ENCODE measurements at regions of chr12 and their contacts with region 1.

Region 1: GRCh38 chr12:131104463-131105350 is 151.0 kb downstream of the ADGRD1 start:
- DNase-seq: no peak
- H3K4me3 ChIP-seq: no peak overlapping the region
- H3K27me3 ChIP-seq: no peaks in the 10 kb centered on the region
- CTCF ChIP-seq: peak; percentile 96

Region 2: DNA sequence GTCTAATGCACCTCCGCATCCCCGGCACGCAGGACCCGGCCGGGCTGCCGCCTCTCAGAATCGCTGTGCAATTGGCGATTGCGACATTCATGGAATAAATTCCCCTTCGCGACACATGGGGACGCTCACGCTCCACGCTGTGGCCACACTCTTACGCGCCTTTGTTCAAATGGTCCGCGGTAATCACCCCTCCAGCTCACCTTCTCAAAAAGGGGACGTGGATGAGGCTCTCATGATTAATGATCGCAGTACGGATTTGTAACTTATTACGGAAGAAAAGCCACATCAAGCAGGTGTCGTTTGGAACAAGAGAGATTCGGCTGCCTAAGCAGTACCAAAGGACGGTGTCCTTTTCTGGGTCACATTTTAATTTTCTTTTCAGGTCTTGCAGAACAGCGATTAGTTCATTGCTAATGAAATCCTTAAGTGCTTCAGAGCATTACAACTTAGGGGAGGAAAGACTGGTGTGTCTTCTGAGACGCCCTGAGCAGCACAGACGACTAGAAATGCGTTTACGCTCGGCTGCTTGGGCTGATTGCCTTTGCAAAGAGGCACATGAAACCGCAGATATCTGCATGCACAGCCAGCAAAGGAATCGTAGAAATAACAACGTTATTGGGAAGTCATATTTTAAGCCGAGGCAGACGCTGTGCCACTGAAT is 188.3 kb before region 1 on chr12:
- CTCF ChIA-PET with region 1: interaction called, 25 read pairs
- POLR2A ChIA-PET with region 1: no interaction called
- DNase-seq: no peak
- H3K4me3 ChIP-seq: peak overlapping the region; percentile 9
- H3K27me3 ChIP-seq: no peaks in the 10 kb centered on the region
- CTCF ChIP-seq: peak; percentile 99

Region 3: DNA sequence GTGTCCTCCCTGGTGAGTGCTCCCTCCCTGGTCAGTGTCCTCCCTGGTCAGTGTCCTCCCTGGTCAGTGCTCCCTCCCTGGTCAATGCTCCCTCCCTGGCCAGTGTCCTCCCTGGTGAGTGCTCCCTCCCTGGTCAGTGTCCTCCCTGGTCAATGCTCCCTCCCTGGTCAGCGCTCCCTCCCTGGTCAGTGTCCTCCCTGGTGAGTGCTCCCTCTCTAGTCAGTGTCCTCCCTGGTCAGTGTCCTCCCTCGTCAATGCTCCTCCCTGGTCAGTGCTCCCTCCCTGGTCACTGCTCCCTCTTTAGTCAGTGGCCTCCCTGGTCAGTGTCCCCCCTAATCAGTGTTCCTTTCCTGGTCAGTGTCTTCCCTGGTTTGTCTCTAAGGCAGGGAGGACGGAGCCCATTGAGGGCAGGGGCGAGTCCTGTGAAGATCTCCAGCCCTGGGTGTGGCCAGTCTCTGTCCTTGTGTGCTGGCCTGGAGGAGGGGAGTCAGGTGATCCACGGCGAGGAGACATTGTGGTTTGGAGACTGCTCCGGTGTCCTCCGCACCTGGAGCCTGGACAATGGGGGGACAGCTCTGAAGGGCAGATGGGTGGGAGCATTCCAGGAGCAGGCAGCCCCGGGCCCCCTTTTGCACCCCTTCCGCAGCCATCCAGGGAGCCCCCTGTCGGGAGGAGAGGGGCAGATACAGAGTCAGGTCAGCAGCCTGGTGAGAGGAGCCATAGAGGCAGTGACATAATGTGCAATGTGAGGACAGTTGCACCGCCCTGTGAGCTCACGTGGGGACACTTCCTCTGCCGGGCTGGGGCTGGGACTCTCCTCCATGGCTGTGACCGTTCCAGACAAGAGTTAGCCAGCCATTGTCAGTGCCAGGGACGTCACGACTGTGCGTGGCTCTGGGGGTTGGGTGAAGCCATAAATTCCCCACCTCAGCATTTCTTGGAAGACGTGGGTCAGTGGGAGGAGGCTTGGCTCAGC is 57.6 kb before region 1 on chr12:
- CTCF ChIA-PET with region 1: no interaction called
- POLR2A ChIA-PET with region 1: no interaction called
- DNase-seq: no peak
- H3K4me3 ChIP-seq: no peak overlapping the region
- H3K27me3 ChIP-seq: no peaks in the 10 kb centered on the region
- CTCF ChIP-seq: no peak

Region 4: DNA sequence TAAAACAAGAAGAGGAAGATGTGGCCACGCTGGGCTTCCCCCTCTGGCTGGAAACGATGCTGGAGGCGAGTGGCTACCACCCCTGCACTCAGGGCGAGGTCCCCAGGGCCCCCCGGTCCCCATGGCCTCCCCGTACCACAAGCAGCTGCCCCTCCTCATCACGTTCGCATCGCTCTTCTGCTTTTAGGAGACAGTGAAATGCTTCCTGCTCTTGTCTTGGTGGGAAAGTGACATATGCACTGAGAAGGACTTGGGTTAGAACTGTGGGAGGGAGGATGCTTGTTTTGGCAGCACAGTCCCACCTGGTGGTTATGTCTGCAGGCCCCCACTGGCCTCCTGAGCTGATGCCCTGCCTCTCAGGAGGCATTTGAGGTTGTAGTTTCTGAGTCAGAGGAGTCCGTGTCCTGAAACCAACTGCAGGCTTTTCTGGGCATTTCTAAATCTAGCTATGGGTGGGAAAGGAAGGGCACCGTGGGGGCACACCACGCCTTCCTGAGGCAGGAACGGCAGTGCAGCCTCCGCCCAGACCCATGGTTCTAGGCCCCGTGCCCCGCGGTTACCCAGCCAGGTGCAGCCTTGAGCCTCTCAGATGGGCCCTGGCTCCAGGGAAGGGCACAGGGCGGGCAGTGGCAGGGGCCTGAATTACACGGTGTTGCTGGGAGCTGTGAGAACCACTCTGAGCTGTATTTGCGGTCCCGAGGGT is 11.7 kb before region 1 on chr12:
- CTCF ChIA-PET with region 1: interaction called, 35 read pairs
- POLR2A ChIA-PET with region 1: no interaction called
- DNase-seq: no peak
- H3K4me3 ChIP-seq: no peak overlapping the region
- H3K27me3 ChIP-seq: no peaks in the 10 kb centered on the region
- CTCF ChIP-seq: no peak

Region 5: GRCh38 chr12:131116391-131117117 is 11.8 kb after region 1 on chr12:
- CTCF ChIA-PET with region 1: interaction called, 40 read pairs
- POLR2A ChIA-PET with region 1: no interaction called
- DNase-seq: peak; percentile 49
- H3K4me3 ChIP-seq: no peak overlapping the region
- H3K27me3 ChIP-seq: no peaks in the 10 kb centered on the region; the same call in 1 of the 2 replicates
- CTCF ChIP-seq: peak; percentile 62

Region 6: DNA sequence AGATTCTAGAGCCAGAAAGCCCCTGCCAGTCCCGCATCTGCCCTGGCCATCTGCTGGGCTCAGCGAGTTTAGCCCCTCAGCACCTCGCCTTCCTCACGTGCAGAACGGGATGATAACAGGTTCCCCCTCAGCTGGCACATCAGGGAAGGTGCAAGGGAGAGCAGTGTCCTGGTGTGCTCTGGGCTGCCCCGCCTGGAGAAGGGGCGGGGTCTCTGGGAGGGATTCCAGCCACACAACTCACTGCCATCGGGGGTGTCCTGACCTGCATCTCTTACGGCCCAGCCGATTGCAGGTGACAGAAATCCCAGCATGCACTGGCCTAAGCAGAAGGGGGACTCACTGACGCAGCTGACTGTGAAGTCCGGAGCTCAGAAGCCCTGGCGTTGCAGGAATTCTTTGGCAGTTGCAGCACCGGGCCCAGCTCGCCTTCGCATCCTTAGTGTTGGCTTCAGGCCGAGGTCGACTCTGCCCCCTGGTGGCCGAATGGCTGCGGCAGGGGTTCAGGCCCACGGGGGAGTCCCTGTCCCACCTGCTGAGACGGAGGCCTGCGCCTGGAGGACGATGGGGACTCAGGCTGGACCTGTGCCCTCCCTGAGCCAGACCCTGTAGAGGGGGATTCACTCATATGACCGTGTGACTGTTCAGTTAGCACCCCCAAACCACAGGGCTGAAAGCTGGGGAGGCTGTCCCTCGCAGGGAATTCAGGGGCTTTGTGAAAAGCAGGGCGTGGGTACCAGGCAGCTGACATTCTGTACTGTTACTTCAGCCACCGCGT is 27.6 kb after region 1 on chr12:
- CTCF ChIA-PET with region 1: interaction called, 96 read pairs
- POLR2A ChIA-PET with region 1: no interaction called
- DNase-seq: no peak
- H3K4me3 ChIP-seq: no peak overlapping the region
- H3K27me3 ChIP-seq: no peaks in the 10 kb centered on the region; the same call in 1 of the 2 replicates
- CTCF ChIP-seq: peak; percentile 80

Region 7: GRCh38 chr12:131830335-131830913 is 725.7 kb after region 1 on chr12:
- CTCF ChIA-PET with region 1: interaction called, 29 read pairs
- POLR2A ChIA-PET with region 1: no interaction called
- DNase-seq: no peak
- H3K4me3 ChIP-seq: peak overlapping the region; percentile 76
- H3K27me3 ChIP-seq: no peaks in the 10 kb centered on the region
- CTCF ChIP-seq: peak; percentile 52

Measured in BJ (cell line).